ENCODE measurements at regions of chr11 and their contacts with region 1.

Region 1: GRCh38 chr11:44538375-44539054 is 26.9 kb upstream of the CD82 start:
- DNase-seq: peak; percentile 73
- ATAC-seq: peak; percentile 98
- H3K4me3 ChIP-seq: no peak overlapping the region
- H3K27ac ChIP-seq: no peak overlapping the region
- H3K4me1 ChIP-seq: no peaks in the 10 kb centered on the region
- H3K27me3 ChIP-seq: peaks cover 3% of the 10 kb centered on the region; the same call in 1 of the 2 replicates
- CTCF ChIP-seq: peak; percentile 91

Region 2: DNA sequence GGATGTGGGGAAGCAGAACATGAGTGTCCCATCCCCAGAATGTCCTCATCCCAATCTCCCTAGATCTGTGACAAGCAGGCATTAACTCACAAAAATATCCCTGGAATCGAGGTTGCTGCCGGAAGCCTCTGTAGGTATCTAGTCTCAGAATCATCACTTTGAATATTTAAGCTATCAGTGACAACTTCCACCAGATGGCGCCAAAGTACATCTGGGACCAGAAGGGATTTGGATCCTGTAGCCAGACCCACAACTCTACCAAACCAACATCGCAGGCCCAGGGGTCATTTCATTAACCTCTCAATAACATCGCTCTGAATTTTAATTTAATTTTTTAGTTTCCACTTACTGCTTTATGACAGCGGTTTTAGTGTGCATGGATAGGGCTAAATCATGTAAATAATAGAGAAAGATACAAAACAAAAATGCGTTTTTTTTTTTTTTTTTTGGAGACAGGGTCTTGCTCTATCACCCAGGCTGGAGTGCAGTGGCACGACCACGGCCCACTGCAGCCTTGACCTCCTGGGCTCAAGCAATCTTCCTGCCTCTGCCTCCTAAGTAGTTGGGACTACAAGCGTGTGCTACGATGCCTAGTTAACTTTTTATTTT is 444.2 kb before region 1 on chr11:
- CTCF ChIA-PET with region 1: no interaction called
- POLR2A ChIA-PET with region 1: no interaction called
- intact Hi-C with region 1: loop called (anchors 1 kb)
- DNase-seq: peak; percentile 88
- ATAC-seq: peak; percentile 50
- H3K4me3 ChIP-seq: no peak overlapping the region
- H3K27ac ChIP-seq: no peak overlapping the region
- H3K4me1 ChIP-seq: peaks cover 16% of the 10 kb centered on the region
- H3K27me3 ChIP-seq: 0 out of 2 replicates have a peak, but pooled peaks cover 6% of the 10 kb centered on the region
- CTCF ChIP-seq: peak; percentile 81

Region 3: GRCh38 chr11:44110231-44110679 is 428.3 kb before region 1 on chr11:
- CTCF ChIA-PET with region 1: no interaction called
- POLR2A ChIA-PET with region 1: no interaction called
- intact Hi-C with region 1: loop called (anchors 1 kb)
- DNase-seq: peak; percentile 66
- ATAC-seq: peak; percentile 86
- H3K4me3 ChIP-seq: no peak overlapping the region
- H3K27ac ChIP-seq: no peak overlapping the region
- H3K4me1 ChIP-seq: no peaks in the 10 kb centered on the region
- H3K27me3 ChIP-seq: no peaks in the 10 kb centered on the region
- CTCF ChIP-seq: peak; percentile 90

Region 4: GRCh38 chr11:44133335-44133946 is 405.1 kb before region 1 on chr11:
- CTCF ChIA-PET with region 1: no interaction called
- POLR2A ChIA-PET with region 1: no interaction called
- intact Hi-C with region 1: loop called (anchors 1 kb)
- DNase-seq: peak; percentile 59
- ATAC-seq: peak; percentile 69
- H3K4me3 ChIP-seq: no peak overlapping the region
- H3K27ac ChIP-seq: no peak overlapping the region
- H3K4me1 ChIP-seq: peaks cover 14% of the 10 kb centered on the region
- H3K27me3 ChIP-seq: no peaks in the 10 kb centered on the region
- CTCF ChIP-seq: peak; percentile 72

Region 5: GRCh38 chr11:44286268-44286880 is 252.1 kb before region 1 on chr11:
- CTCF ChIA-PET with region 1: no interaction called
- POLR2A ChIA-PET with region 1: no interaction called
- intact Hi-C with region 1: loop called (anchors 1 kb)
- DNase-seq: peak; percentile 70
- ATAC-seq: peak; percentile 60
- H3K4me3 ChIP-seq: no peak overlapping the region
- H3K27ac ChIP-seq: no peak overlapping the region
- H3K4me1 ChIP-seq: no peaks in the 10 kb centered on the region
- H3K27me3 ChIP-seq: no peaks in the 10 kb centered on the region
- CTCF ChIP-seq: peak; percentile 94

Region 6: GRCh38 chr11:44519989-44520737 is 18.4 kb before region 1 on chr11:
- CTCF ChIA-PET with region 1: interaction called, 4 read pairs
- POLR2A ChIA-PET with region 1: no interaction called
- intact Hi-C with region 1: loop called (anchors 1 kb)
- DNase-seq: no peak
- ATAC-seq: no peak
- H3K4me3 ChIP-seq: no peak overlapping the region
- H3K27ac ChIP-seq: no peak overlapping the region
- H3K4me1 ChIP-seq: no peaks in the 10 kb centered on the region
- H3K27me3 ChIP-seq: peaks cover 15% of the 10 kb centered on the region; the same call in 1 of the 2 replicates
- CTCF ChIP-seq: no peak